Naive thymus-derived CD4-positive, alpha-beta T cell (primary cell): ENCODE measurements at regions of chr4 and their contacts with region 1.

Region 1: DNA sequence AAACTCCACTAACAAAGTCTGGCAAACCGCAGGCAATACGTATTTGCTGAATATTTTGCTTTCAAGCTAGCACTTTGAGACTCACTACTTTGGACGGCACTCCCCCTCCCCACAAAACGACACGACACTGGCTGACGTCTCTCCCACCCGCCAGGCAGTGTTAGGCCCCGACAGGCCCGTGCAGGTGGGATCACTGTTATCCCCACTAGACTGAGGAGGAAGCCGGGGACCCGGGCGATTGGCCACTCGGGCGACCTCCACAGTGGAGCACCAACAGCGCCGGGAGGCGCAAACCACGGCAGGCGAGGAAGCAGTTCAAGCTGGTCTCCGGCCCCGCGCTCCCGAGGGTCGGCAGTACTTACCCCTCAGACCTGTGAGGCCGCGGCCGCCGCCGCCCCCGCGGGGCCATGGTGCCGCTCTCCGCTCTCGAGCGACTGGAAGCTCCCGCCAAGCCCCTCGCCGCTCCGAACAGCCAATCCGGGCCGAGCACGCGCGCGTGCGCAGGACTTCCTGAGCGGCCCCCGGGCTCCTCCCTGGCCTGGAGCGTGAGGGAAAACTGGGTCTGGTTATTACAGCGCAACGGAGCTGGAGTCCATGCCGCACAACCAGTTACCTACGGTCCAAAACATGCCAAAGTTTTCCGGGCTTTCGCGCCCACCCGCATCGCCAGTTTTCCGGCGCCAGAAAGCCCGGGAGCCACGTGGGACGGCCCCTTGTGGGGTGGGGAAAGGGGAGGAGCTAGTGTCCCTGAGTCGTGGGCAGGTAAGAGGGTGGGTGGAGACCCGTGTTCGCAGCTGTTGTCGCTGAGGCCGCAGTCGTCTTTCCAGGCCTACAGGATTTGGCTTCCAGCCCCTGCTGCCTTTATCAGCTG is at the start of gene CENPU:
- DNase-seq: peak; percentile 89 to 98 (median 94)
- ATAC-seq: peak; percentile 98
- H3K4me3 ChIP-seq: peak within 1 kb of the TSS; percentile 82
- H3K4me3 Mint-ChIP-seq: peak within 1 kb of the TSS; percentile 84 to 98 (median 89)
- H3K27ac ChIP-seq: peak within 1 kb of the TSS; percentile 66
- H3K27ac Mint-ChIP-seq: peak within 1 kb of the TSS; percentile 60 to 96 (median 89)
- H3K4me1 ChIP-seq: peaks cover 7 to 11% of the 10 kb centered on the region in 2 donors
- H3K4me1 Mint-ChIP-seq: peaks cover 4 to 50% (median 20%) of the 10 kb centered on the region in 7 donors
- H3K27me3 ChIP-seq: no peaks in the 10 kb centered on the region
- H3K27me3 Mint-ChIP-seq: no peaks in the 10 kb centered on the region
- total RNA-seq, gene CENPU: 1.1 to 43.8 (median 3.1) TPM

Region 2: DNA sequence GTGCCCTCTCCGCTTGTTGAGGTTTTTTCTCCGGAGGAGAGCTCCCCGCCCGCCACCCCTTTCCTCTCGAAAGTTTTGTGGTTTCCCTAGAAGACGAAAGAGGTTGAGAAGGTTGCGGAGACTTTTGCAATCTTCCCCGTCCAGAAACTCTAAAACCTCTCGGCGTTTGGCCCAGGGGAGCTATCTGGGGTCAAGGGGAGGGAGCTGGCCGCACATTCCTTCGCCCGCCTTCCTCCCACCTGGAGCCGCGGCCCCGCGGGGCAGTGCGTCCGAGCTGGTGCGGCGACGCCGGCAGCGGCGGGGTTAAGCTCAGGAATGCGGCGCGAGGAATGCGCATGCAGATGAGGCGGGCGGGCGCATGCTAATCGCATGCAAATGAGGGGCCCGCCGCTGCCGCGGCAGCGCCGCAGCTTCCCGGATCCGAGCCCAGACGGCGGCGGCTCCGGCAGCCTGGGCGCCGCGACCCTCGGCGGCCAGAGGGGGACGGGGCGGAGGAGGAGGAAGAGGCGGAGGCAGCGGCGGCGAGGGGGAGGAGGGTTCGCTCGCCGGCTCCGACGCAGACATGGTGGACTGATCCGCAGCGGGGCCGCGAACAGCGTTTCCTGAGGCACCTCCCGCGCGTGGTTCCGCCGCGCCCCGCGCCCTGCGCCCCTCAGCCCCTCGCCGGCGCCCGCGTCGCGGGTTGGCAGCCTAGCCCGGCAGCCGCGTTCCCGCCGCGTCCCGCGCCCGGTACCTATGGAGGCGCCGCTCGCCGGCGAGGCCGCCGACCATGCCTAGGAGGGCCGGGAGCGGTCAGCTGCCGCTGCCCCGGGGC is 1635.0 kb before region 1 on chr4 and contains the start of gene WWC2:
- CTCF ChIA-PET with region 1: no interaction called
- POLR2A ChIA-PET with region 1: no interaction called
- intact Hi-C with region 1: loop called in 1 of 2 experiments (anchors 10 kb)
- DNase-seq: peak; percentile 40 to 68 (median 62)
- ATAC-seq: peak; percentile 85
- H3K4me3 ChIP-seq: peak within 1 kb of the TSS; percentile 75
- H3K4me3 Mint-ChIP-seq: peak within 1 kb of the TSS; percentile 51 to 87 (median 83)
- H3K27ac ChIP-seq: peak within 1 kb of the TSS; percentile 48
- H3K27ac Mint-ChIP-seq: peak within 1 kb of the TSS in 3 of 9 donors; percentile 56 to 72 (median 68)
- H3K4me1 ChIP-seq: peaks cover 0 to 4% of the 10 kb centered on the region in 2 donors
- H3K4me1 Mint-ChIP-seq: peaks cover 3 to 53% (median 34%) of the 10 kb centered on the region in 7 donors
- H3K27me3 ChIP-seq: peaks cover 0 to 2% of the 10 kb centered on the region in 2 donors
- H3K27me3 Mint-ChIP-seq: peaks cover 0 to 61% (median 0%) of the 10 kb centered on the region in 5 donors
- total RNA-seq, gene WWC2: 0.07 to 13.8 (median 10.9) TPM

Region 3: GRCh38 chr4:184417802-184418511 is 315.9 kb before region 1 on chr4:
- CTCF ChIA-PET with region 1: no interaction called
- POLR2A ChIA-PET with region 1: no interaction called
- intact Hi-C with region 1: loop called in 1 of 2 experiments (anchors 1 kb)
- DNase-seq: peak in 2 of 9 donors; percentile 26 to 31
- ATAC-seq: peak; percentile 69
- H3K4me3 ChIP-seq: peak overlapping the region; percentile 64
- H3K4me3 Mint-ChIP-seq: peak overlapping the region; percentile 23 to 94 (median 82)
- H3K27ac ChIP-seq: peak overlapping the region; percentile 74
- H3K27ac Mint-ChIP-seq: peak overlapping the region; percentile 82 to 97 (median 95)
- H3K4me1 ChIP-seq: peaks cover 35 to 52% of the 10 kb centered on the region in 2 donors
- H3K4me1 Mint-ChIP-seq: peaks cover 43 to 80% (median 77%) of the 10 kb centered on the region in 7 donors
- H3K27me3 ChIP-seq: no peaks in the 10 kb centered on the region
- H3K27me3 Mint-ChIP-seq: no peaks in the 10 kb centered on the region

Region 4: GRCh38 chr4:184705692-184706091 is 28.2 kb before region 1 on chr4:
- CTCF ChIA-PET with region 1: no interaction called
- POLR2A ChIA-PET with region 1: no interaction called
- intact Hi-C with region 1: no loop called
- DNase-seq: no peak
- ATAC-seq: no peak
- H3K4me3 ChIP-seq: no peak overlapping the region
- H3K4me3 Mint-ChIP-seq: peak overlapping the region in 2 of 10 donors; percentile 6 to 57
- H3K27ac ChIP-seq: no peak overlapping the region
- H3K27ac Mint-ChIP-seq: peak overlapping the region in 1 of 9 donors; percentile 83
- H3K4me1 ChIP-seq: no peaks in the 10 kb centered on the region
- H3K4me1 Mint-ChIP-seq: peaks cover 0 to 29% (median 0%) of the 10 kb centered on the region in 7 donors
- H3K27me3 ChIP-seq: no peaks in the 10 kb centered on the region
- H3K27me3 Mint-ChIP-seq: no peaks in the 10 kb centered on the region

Region 5: DNA sequence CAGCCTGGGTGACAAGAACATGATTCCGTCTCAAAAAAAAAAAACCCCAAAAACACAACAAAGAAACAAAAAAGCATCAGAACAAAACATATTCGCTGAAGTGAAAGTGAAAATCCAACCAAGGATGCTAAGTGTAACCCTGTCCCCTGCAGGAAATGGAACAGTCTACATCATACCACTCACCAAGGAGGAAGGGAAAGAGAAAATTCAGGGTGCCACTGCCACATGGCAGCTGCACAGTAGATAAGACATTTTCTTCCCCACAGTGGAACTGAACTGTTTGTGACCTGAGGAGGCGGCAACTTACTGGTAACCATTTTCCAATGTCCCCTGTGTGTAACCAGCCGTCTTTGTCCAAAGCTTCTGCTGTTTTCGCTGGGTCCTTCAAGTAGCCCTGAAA is 28.2 kb after region 1 on chr4:
- CTCF ChIA-PET with region 1: no interaction called
- POLR2A ChIA-PET with region 1: interaction called, 5 read pairs
- intact Hi-C with region 1: loop called in 1 of 2 experiments (anchors 1 kb)
- DNase-seq: peak in 8 of 9 donors; percentile 38 to 84 (median 75)
- ATAC-seq: peak; percentile 96
- H3K4me3 ChIP-seq: no peak overlapping the region
- H3K4me3 Mint-ChIP-seq: peak overlapping the region; percentile 6 to 78 (median 66)
- H3K27ac ChIP-seq: peak overlapping the region; percentile 36
- H3K27ac Mint-ChIP-seq: peak overlapping the region; percentile 83 to 94 (median 87)
- H3K4me1 ChIP-seq: peaks cover 5 to 14% of the 10 kb centered on the region in 2 donors
- H3K4me1 Mint-ChIP-seq: peaks cover 0 to 23% (median 20%) of the 10 kb centered on the region in 7 donors
- H3K27me3 ChIP-seq: no peaks in the 10 kb centered on the region
- H3K27me3 Mint-ChIP-seq: no peaks in the 10 kb centered on the region

Region 6: GRCh38 chr4:184801781-184802696 is 68.2 kb after region 1 on chr4:
- CTCF ChIA-PET with region 1: no interaction called
- POLR2A ChIA-PET with region 1: no interaction called
- intact Hi-C with region 1: no loop called
- DNase-seq: no peak
- ATAC-seq: no peak
- H3K4me3 ChIP-seq: no peak overlapping the region
- H3K4me3 Mint-ChIP-seq: no peak overlapping the region
- H3K27ac ChIP-seq: no peak overlapping the region
- H3K27ac Mint-ChIP-seq: no peak overlapping the region
- H3K4me1 ChIP-seq: no peaks in the 10 kb centered on the region
- H3K4me1 Mint-ChIP-seq: peaks cover 3 to 30% (median 8%) of the 10 kb centered on the region in 7 donors
- H3K27me3 ChIP-seq: no peaks in the 10 kb centered on the region
- H3K27me3 Mint-ChIP-seq: no peaks in the 10 kb centered on the region

Region 7: GRCh38 chr4:185203486-185204237 is 469.8 kb after region 1 on chr4 and contains the start of gene CFAP97:
- CTCF ChIA-PET with region 1: no interaction called
- POLR2A ChIA-PET with region 1: no interaction called
- intact Hi-C with region 1: loop called (anchors 1 to 5 kb)
- DNase-seq: peak; percentile 78 to 90 (median 85)
- ATAC-seq: peak; percentile 89
- H3K4me3 ChIP-seq: peak within 1 kb of the TSS; percentile 64
- H3K4me3 Mint-ChIP-seq: peak within 1 kb of the TSS; percentile 87 to 99 (median 96)
- H3K27ac ChIP-seq: peak within 1 kb of the TSS; percentile 75
- H3K27ac Mint-ChIP-seq: peak within 1 kb of the TSS; percentile 95 to 99 (median 98)
- H3K4me1 ChIP-seq: peaks cover 22% of the 10 kb centered on the region in 2 donors
- H3K4me1 Mint-ChIP-seq: peaks cover 28 to 60% (median 53%) of the 10 kb centered on the region in 7 donors
- H3K27me3 ChIP-seq: no peaks in the 10 kb centered on the region
- H3K27me3 Mint-ChIP-seq: peaks cover 0 to 3% (median 0%) of the 10 kb centered on the region in 5 donors
- total RNA-seq, gene CFAP97: 23.6 to 46.5 (median 38.0) TPM

Region 8: GRCh38 chr4:185471235-185472102 is 737.6 kb after region 1 on chr4 and contains the start of gene CCDC110:
- CTCF ChIA-PET with region 1: no interaction called
- POLR2A ChIA-PET with region 1: no interaction called
- intact Hi-C with region 1: loop called in 1 of 2 experiments (anchors 1 kb)
- DNase-seq: peak; percentile 72 to 89 (median 86)
- ATAC-seq: peak; percentile 99
- H3K4me3 ChIP-seq: peak within 1 kb of the TSS; percentile 61
- H3K4me3 Mint-ChIP-seq: peak within 1 kb of the TSS; percentile 87 to 98 (median 92)
- H3K27ac ChIP-seq: peak within 1 kb of the TSS; percentile 65
- H3K27ac Mint-ChIP-seq: peak within 1 kb of the TSS; percentile 5 to 90 (median 86)
- H3K4me1 ChIP-seq: peaks cover 0 to 3% of the 10 kb centered on the region in 2 donors
- H3K4me1 Mint-ChIP-seq: peaks cover 5 to 18% (median 9%) of the 10 kb centered on the region in 7 donors
- H3K27me3 ChIP-seq: no peaks in the 10 kb centered on the region
- H3K27me3 Mint-ChIP-seq: peaks cover 0 to 52% (median 6%) of the 10 kb centered on the region in 5 donors
- total RNA-seq, gene CCDC110: 0.42 to 1.8 (median 0.76) TPM in 4 of 5 experiments, not detected in the other

Region 9: GRCh38 chr4:185534866-185535611 is 801.1 kb after region 1 on chr4 and contains the start of gene PDLIM3:
- CTCF ChIA-PET with region 1: no interaction called
- POLR2A ChIA-PET with region 1: no interaction called
- intact Hi-C with region 1: no loop called
- DNase-seq: peak in 1 of 9 donors; percentile 28
- ATAC-seq: no peak
- H3K4me3 ChIP-seq: no peak within 1 kb of the TSS
- H3K4me3 Mint-ChIP-seq: peak within 1 kb of the TSS; percentile 37 to 77 (median 64)
- H3K27ac ChIP-seq: no peak within 1 kb of the TSS
- H3K27ac Mint-ChIP-seq: no peak within 1 kb of the TSS
- H3K4me1 ChIP-seq: no peaks in the 10 kb centered on the region
- H3K4me1 Mint-ChIP-seq: peaks cover 0 to 12% (median 6%) of the 10 kb centered on the region in 7 donors
- H3K27me3 ChIP-seq: peaks cover 0 to 5% of the 10 kb centered on the region in 2 donors
- H3K27me3 Mint-ChIP-seq: peaks cover 36 to 53% (median 43%) of the 10 kb centered on the region in 5 donors
- total RNA-seq, gene PDLIM3: not detected